ENCODE measurements at regions of chr10 and their contacts with region 1.

Region 1: GRCh38 chr10:130110246-130111112 is at the start of gene C10orf143:
- DNase-seq: peak; percentile 96 to 100 (median 99)
- ATAC-seq: peak; percentile 89
- H3K4me3 ChIP-seq: peak within 1 kb of the TSS; percentile 100
- H3K4me3 Mint-ChIP-seq: peak within 1 kb of the TSS; percentile 90 to 99 (median 98)
- H3K27ac ChIP-seq: peak within 1 kb of the TSS; percentile 88
- H3K27ac Mint-ChIP-seq: peak within 1 kb of the TSS; percentile 90 to 99 (median 98)
- H3K4me1 ChIP-seq: peaks cover 19 to 21% of the 10 kb centered on the region in 2 donors
- H3K4me1 Mint-ChIP-seq: peaks cover 27 to 67% (median 53%) of the 10 kb centered on the region in 7 donors
- H3K27me3 ChIP-seq: no peaks in the 10 kb centered on the region
- H3K27me3 Mint-ChIP-seq: no peaks in the 10 kb centered on the region
- total RNA-seq, gene C10orf143: 2.6 to 12.5 (median 10.2) TPM

Region 2: DNA sequence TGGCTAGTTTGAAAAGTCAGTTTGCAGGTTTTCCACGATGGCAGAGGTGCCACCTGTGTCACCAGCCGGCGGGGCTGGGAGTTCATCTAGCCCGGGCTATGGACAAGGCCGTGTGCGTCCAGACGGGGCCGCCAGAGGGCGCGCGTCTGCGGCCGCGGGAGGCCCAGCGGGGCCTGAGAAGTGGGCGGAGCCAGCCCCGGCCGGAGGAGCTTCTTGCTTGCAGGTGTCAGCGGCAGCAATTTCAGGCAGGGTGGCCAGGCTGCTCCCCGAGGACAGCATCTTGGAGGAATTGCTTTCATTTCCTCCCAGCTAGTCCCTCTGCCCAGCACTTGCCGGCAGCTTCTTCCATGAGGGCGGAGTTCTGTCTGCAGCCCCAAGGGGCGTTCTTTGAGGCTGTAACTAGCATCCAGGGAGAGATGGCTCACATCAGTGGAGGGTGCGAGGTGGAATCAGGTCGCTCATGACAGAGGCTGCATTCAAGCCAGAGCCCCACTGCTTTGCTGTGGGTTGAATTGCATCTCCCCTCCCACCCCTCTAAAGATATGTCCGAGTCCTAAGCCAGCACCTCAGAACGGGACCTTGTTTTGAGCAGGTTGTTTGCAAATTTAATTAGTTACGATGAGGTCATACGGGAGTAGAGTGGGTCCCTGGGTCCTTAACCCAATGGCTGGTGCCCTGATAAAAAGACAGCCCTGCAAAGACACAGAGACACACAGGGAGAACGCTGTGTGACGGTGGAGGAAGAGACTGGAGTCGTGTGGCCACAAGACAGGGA is 1898.3 kb before region 1 on chr10:
- CTCF ChIA-PET with region 1: interaction called, 4 read pairs
- POLR2A ChIA-PET with region 1: interaction called, 4 read pairs
- intact Hi-C with region 1: loop called (anchors 1 to 2 kb)
- DNase-seq: peak; percentile 66 to 91 (median 80)
- ATAC-seq: peak; percentile 87
- H3K4me3 ChIP-seq: peak overlapping the region; percentile 44
- H3K4me3 Mint-ChIP-seq: peak overlapping the region; percentile 75 to 91 (median 86)
- H3K27ac ChIP-seq: no peak overlapping the region
- H3K27ac Mint-ChIP-seq: peak overlapping the region; percentile 83 to 94 (median 88)
- H3K4me1 ChIP-seq: peaks cover 4 to 8% of the 10 kb centered on the region in 2 donors
- H3K4me1 Mint-ChIP-seq: peaks cover 10 to 25% (median 17%) of the 10 kb centered on the region in 7 donors
- H3K27me3 ChIP-seq: no peaks in the 10 kb centered on the region
- H3K27me3 Mint-ChIP-seq: peaks cover 0 to 21% (median 0%) of the 10 kb centered on the region in 5 donors

Region 3: DNA sequence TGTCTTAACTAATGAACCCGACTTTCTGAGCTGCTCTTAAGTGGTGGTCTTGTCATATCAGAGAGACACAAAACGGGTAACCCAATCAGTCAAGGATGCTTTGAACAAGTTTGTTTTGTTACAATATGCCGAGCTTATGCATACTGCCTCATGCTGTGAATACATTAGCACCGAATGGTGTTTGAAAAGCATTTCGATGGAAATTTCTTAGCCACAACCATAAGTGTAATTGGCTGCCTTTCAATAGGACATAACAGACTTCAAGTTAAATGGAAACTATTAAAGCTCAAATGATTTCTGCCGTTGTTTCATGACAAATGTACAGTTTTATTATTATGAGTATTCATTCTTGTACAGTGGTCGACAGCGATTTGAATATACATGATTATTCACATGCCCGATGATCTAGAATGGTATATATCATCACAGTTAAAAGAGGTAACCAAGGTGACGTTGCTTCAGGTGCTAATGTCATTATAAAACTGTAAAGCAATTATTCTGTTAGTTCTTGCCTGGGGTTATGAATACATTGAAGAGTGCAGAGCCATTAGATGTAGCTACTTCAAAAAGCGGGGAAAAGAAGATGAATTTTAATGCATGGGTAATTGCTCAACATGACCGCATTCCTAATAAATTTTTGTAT is 265.2 kb before region 1 on chr10:
- CTCF ChIA-PET with region 1: no interaction called
- POLR2A ChIA-PET with region 1: no interaction called
- intact Hi-C with region 1: no loop called
- DNase-seq: no peak
- ATAC-seq: no peak
- H3K4me3 ChIP-seq: no peak overlapping the region
- H3K4me3 Mint-ChIP-seq: no peak overlapping the region
- H3K27ac ChIP-seq: no peak overlapping the region
- H3K27ac Mint-ChIP-seq: no peak overlapping the region
- H3K4me1 ChIP-seq: no peaks in the 10 kb centered on the region
- H3K4me1 Mint-ChIP-seq: no peaks in the 10 kb centered on the region
- H3K27me3 ChIP-seq: no peaks in the 10 kb centered on the region
- H3K27me3 Mint-ChIP-seq: peaks cover 0 to 7% (median 0%) of the 10 kb centered on the region in 5 donors

Region 4: GRCh38 chr10:130127364-130128061 is 17.0 kb after region 1 on chr10:
- CTCF ChIA-PET with region 1: interaction called, 19 read pairs
- POLR2A ChIA-PET with region 1: interaction called, 25 read pairs
- intact Hi-C with region 1: loop called (anchors 1 kb)
- DNase-seq: peak in 8 of 9 donors; percentile 24 to 60 (median 46)
- ATAC-seq: peak; percentile 92
- H3K4me3 ChIP-seq: no peak overlapping the region
- H3K4me3 Mint-ChIP-seq: peak overlapping the region in 2 of 10 donors; percentile 19 to 22
- H3K27ac ChIP-seq: no peak overlapping the region
- H3K27ac Mint-ChIP-seq: no peak overlapping the region
- H3K4me1 ChIP-seq: no peaks in the 10 kb centered on the region
- H3K4me1 Mint-ChIP-seq: peaks cover 0 to 10% (median 7%) of the 10 kb centered on the region in 7 donors
- H3K27me3 ChIP-seq: no peaks in the 10 kb centered on the region
- H3K27me3 Mint-ChIP-seq: peaks cover 9 to 53% (median 17%) of the 10 kb centered on the region in 5 donors

Region 5: DNA sequence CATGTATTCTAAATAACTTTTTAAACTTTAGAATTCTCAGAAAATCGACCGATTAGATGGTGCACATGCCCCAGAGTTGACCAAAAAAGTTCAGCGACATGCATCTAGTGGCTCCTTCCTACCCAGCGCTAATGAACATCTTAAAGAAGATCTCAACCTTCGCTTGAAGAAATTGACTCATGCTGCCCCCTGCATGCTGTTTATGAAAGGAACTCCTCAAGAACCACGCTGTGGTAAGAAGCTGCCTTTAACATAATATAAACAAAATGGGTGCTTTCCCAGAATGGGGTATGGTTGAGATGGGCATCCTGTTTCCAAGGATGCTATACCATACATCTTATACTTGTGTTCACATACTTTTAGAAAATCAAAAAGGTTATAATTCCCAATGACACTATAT is 50.3 kb after region 1 on chr10:
- CTCF ChIA-PET with region 1: no interaction called
- POLR2A ChIA-PET with region 1: no interaction called
- intact Hi-C with region 1: loop called in 1 of 2 experiments (anchors 2 kb)
- DNase-seq: peak in 1 of 9 donors; percentile 8
- ATAC-seq: peak; percentile 32
- H3K4me3 ChIP-seq: no peak overlapping the region
- H3K4me3 Mint-ChIP-seq: no peak overlapping the region
- H3K27ac ChIP-seq: no peak overlapping the region
- H3K27ac Mint-ChIP-seq: no peak overlapping the region
- H3K4me1 ChIP-seq: no peaks in the 10 kb centered on the region
- H3K4me1 Mint-ChIP-seq: peaks cover 1 to 31% (median 21%) of the 10 kb centered on the region in 7 donors
- H3K27me3 ChIP-seq: no peaks in the 10 kb centered on the region
- H3K27me3 Mint-ChIP-seq: no peaks in the 10 kb centered on the region

Region 6: GRCh38 chr10:130190055-130190736 is 79.7 kb after region 1 on chr10:
- CTCF ChIA-PET with region 1: interaction called, 3 read pairs
- POLR2A ChIA-PET with region 1: no interaction called
- intact Hi-C with region 1: loop called in 1 of 2 experiments (anchors 1 kb)
- DNase-seq: peak; percentile 75 to 97 (median 88)
- ATAC-seq: peak; percentile 99
- H3K4me3 ChIP-seq: peak overlapping the region; percentile 51
- H3K4me3 Mint-ChIP-seq: peak overlapping the region in 6 of 10 donors; percentile 12 to 65 (median 44)
- H3K27ac ChIP-seq: no peak overlapping the region
- H3K27ac Mint-ChIP-seq: no peak overlapping the region
- H3K4me1 ChIP-seq: no peaks in the 10 kb centered on the region
- H3K4me1 Mint-ChIP-seq: peaks cover 0 to 9% (median 7%) of the 10 kb centered on the region in 7 donors
- H3K27me3 ChIP-seq: no peaks in the 10 kb centered on the region
- H3K27me3 Mint-ChIP-seq: peaks cover 6 to 21% (median 9%) of the 10 kb centered on the region in 5 donors

Region 7: GRCh38 chr10:131981429-131982184 is 1871.1 kb after region 1 on chr10 and contains the start of gene BNIP3:
- CTCF ChIA-PET with region 1: no interaction called
- POLR2A ChIA-PET with region 1: no interaction called
- intact Hi-C with region 1: loop called (anchors 2 to 5 kb)
- DNase-seq: peak; percentile 92 to 99 (median 93)
- ATAC-seq: peak; percentile 96
- H3K4me3 ChIP-seq: peak within 1 kb of the TSS; percentile 79
- H3K4me3 Mint-ChIP-seq: peak within 1 kb of the TSS; percentile 81 to 93 (median 88)
- H3K27ac ChIP-seq: peak within 1 kb of the TSS; percentile 79
- H3K27ac Mint-ChIP-seq: peak within 1 kb of the TSS; percentile 66 to 89 (median 84)
- H3K4me1 ChIP-seq: peaks cover 7 to 22% of the 10 kb centered on the region in 2 donors
- H3K4me1 Mint-ChIP-seq: peaks cover 23 to 49% (median 42%) of the 10 kb centered on the region in 7 donors
- H3K27me3 ChIP-seq: no peaks in the 10 kb centered on the region
- H3K27me3 Mint-ChIP-seq: peaks cover 0 to 18% (median 0%) of the 10 kb centered on the region in 5 donors
- total RNA-seq, gene BNIP3: 17.7 to 81.7 (median 39.3) TPM

Measured in naive thymus-derived CD4-positive, alpha-beta T cell (primary cell).